Psoas muscle (tissue), 8 donors: ENCODE measurements at regions of chr16 and their contacts with region 1.

Region 1: DNA sequence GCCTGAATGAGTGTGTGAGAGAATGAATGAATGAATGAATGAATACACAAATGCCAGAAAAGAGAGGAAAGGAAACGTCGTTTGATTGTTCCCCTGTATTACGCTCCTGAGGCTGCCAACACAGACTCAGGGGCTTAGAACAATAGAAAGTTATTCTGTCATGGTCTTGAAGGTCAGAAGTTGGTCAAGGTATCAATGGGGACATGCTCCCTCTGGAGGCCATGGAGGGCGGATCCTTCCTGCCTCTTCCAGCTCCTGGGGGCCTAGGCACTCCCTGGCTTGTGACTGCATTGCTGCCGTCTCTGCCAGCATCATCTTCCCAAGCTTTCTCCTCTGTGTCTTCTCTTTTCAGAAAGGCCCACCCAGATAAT is 1.5 kb upstream of the SLC38A8 start:
- DNase-seq: no peak
- ATAC-seq: peak in 2 of 4 donors; percentile 37 to 61
- H3K4me3 ChIP-seq: no peak overlapping the region
- H3K27ac ChIP-seq: no peak overlapping the region
- H3K4me1 ChIP-seq: peaks cover 3% of the 10 kb centered on the region
- H3K27me3 ChIP-seq: no peaks in the 10 kb centered on the region
- CTCF ChIP-seq: peak; percentile 18

Region 2: DNA sequence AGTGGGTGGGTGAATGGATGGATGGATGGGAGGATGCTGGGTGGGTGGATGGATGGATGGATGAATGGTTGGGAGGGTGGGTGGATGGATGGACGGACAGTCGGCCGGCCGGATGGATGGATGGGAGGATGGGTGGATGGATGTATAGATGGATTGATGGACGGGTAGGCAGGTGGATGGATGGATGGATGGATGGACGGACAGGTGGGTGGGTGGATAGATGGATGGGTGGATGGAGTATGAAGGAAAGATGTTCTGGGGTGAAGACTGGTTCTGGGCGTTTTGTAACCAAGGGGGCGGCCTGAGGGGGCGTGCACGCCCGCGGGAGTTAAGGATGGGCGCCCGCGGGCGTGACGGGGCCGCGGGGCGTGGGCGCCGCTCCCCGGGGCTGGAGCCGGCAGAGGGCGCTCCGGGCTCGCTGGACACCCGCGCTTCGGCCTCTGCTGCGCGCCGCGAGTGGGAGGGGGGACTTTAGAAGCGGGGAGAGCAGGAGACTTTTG is 76.2 kb before region 1 on chr16 and contains the start of gene NECAB2:
- intact Hi-C with region 1: loop called in 1 of 2 experiments (anchors 5 kb)
- DNase-seq: peak; percentile 60 to 73
- ATAC-seq: peak in 3 of 4 donors; percentile 39 to 68 (median 65)
- H3K4me3 ChIP-seq: peak within 1 kb of the TSS; percentile 48
- H3K27ac ChIP-seq: no peak within 1 kb of the TSS
- H3K4me1 ChIP-seq: no peaks in the 10 kb centered on the region
- H3K27me3 ChIP-seq: no peaks in the 10 kb centered on the region
- CTCF ChIP-seq: peak; percentile 64
- total RNA-seq, gene NECAB2: not detected

Region 3: GRCh38 chr16:83975590-83976260 is 68.4 kb before region 1 on chr16:
- intact Hi-C with region 1: loop called in 1 of 2 experiments (anchors 5 kb)
- DNase-seq: no peak
- ATAC-seq: no peak
- H3K4me3 ChIP-seq: no peak overlapping the region
- H3K27ac ChIP-seq: no peak overlapping the region
- H3K4me1 ChIP-seq: no peaks in the 10 kb centered on the region
- H3K27me3 ChIP-seq: no peaks in the 10 kb centered on the region
- CTCF ChIP-seq: no peak